Heart right ventricle (tissue), 16 donors: ENCODE measurements at regions of chr17 and their contacts with region 1.

Region 1: DNA sequence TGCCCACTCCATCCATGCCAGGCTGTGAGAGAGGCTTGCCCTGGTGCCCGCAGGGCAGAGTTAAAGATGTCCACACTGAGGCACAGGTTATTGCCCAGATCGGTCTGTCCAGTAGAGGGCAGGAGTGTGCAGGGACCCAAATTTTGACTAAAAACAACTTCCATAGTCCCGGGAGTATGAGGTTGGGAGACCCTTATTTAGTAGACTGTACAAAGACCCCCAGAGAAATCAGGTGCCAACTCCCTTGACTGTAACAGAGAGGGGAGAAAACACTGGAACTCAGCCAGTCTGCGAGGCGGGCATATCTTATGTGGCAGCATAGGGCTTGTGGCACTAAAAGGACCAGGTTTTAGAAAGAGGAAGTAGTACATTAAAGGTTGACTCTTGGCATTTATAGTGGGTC is 43.4 kb downstream of the HNF1B start:
- DNase-seq: peak in 1 of 2 donors; percentile 16
- ATAC-seq: peak in 6 of 8 donors; percentile 20 to 70 (median 51)
- H3K4me3 ChIP-seq: no peak overlapping the region
- H3K27ac ChIP-seq: no peak overlapping the region
- H3K4me1 ChIP-seq: no peaks in the 10 kb centered on the region
- H3K27me3 ChIP-seq: peaks cover 0 to 29% (median 13%) of the 10 kb centered on the region in 7 donors
- CTCF ChIP-seq: peak; percentile 31 to 67 (median 56)

Region 2: DNA sequence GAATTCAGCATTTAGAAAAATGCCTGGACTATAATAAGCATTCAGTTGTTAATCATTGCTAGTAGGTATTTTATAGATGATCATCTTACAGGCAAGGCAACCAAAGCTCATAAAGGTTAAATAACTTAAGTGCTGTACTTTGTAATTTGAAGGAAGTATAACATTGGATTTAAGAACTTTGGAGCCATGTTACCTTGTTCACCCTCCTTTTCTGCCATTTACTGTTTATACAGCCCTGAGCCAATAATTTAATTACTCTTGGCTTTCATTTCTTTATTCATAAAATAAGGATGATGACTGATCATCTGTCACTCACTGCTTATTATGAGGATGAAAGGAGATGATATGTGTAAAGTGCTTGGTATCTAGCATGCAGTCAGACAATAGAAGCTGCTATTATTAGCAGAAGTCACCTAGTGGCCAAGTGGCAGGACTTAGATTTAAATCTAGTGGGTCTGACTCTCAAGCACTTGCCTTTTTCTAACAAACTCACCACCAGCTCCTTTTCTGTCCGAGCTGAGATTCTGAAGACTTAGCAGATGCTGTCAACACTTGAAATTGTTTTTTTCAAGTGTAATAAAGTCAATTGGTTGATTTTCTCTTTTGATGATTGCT is 40.0 kb before region 1 on chr17:
- intact Hi-C with region 1: no loop called
- DNase-seq: no peak
- ATAC-seq: no peak
- H3K4me3 ChIP-seq: no peak overlapping the region
- H3K27ac ChIP-seq: no peak overlapping the region
- H3K4me1 ChIP-seq: no peaks in the 10 kb centered on the region
- H3K27me3 ChIP-seq: no peaks in the 10 kb centered on the region
- CTCF ChIP-seq: no peak

Region 3: DNA sequence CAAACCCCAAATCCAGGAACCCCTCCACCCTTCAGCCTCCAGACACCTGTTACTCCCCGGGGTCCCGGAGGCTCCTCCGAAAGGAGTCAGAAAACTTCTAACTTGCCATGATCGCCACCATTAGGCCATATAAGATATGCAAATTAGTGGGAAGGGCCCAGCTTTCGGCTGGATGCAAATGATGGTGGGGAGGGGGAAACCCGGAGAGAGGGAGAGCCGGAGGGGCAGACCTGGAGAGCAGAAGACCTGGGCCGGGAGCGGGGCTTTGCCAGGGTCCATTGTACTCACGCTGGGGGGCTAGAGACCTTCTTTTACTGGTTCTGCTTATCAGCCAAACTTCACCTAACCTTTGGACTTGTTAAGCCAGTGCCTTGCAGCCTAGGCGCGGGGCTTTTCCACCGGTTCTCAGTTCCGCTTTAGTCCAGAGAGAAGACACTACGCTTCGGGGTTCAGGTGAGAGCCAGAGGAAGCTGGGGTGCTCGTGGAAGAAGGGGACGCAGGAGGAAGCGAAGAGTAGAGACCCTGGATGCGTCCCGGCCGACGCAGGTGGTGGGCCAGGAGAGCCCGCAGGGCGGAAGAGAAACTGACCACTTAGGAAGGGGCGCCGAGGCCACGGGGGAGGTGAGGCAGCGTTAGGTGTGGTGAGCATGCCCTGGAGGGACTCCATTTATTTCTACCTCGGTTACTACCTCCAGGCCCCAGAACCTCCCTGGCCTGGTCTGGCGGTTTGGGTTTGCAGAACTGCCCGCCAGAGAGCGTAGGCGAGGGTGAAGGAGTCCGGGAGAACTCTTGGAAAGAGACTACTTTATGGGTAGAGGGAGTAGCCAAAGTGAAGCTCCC is 43.7 kb after region 1 on chr17 and contains the start of gene HNF1B:
- intact Hi-C with region 1: loop called in 2 of 10 experiments (anchors 2 to 10 kb)
- DNase-seq: no peak
- ATAC-seq: no peak
- H3K4me3 ChIP-seq: peak within 1 kb of the TSS in 8 of 10 donors; percentile 19 to 52 (median 35)
- H3K27ac ChIP-seq: no peak within 1 kb of the TSS
- H3K4me1 ChIP-seq: peaks cover 8 to 42% (median 32%) of the 10 kb centered on the region in 9 donors
- H3K27me3 ChIP-seq: peaks cover 32 to 99% (median 92%) of the 10 kb centered on the region in 7 donors
- CTCF ChIP-seq: no peak
- total RNA-seq, gene HNF1B: not detected

Region 4: DNA sequence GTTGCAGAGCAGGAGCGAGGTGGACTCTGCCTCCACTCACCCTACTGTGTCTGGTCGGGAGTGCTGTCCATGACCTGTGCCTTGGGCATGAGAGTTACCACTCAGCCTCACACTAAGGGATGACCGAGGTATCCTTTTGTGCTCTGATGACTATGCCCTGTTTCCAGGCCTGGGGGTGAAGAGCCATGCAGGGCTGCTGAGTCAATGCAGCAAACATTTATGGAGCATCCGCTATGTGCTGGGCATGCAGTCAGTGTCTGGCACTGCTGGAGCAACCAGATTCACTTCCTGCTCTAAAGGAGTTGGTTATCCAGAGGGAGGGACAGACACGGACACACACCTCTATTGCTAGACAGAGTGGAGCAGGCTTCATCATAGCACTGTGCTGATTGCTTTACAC is 51.0 kb after region 1 on chr17:
- intact Hi-C with region 1: loop called in 1 of 10 experiments (anchors 10 kb)
- DNase-seq: no peak
- ATAC-seq: no peak
- H3K4me3 ChIP-seq: no peak overlapping the region
- H3K27ac ChIP-seq: no peak overlapping the region
- H3K4me1 ChIP-seq: no peaks in the 10 kb centered on the region
- H3K27me3 ChIP-seq: peaks cover 0 to 62% (median 43%) of the 10 kb centered on the region in 7 donors
- CTCF ChIP-seq: no peak

Region 5: DNA sequence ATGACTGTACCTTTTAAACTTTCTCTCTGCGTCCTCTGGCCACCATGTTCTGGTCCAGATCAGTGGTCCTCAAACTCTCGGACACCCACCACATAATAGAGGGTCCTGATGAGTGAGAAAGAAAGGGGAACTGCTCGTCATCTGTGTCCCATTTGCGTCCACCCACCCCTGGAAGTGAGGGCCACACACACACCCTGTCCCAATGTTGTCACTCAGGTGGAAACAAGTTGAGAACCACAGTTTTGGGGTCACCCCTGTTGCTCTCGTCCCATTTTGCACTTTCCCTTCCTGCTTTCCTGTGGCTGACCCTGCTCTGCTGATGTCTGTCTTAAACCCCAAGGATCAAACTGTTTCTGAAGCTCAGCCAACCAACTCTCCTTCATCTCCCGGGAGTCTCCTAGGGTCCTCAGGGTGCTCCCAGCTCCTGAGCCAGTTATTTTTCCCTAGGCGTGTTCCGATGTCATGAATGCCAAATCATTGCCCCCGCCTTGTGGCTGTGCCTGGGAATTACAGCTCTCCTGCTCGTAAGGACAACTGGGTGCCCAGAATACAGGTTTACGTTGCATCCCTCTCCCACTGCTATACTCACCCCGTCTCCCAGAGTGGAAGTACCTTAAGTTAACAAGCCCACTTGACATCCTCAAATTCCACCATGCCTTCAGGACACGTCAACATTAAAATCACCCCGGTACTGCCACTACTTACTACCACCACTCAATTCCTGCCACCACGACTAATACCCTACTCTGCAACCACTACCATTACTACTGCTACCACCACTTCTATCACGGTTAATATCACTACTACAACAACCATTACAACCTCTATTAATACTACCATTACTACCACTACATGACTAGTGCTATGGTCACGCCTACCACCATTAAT is 69.4 kb after region 1 on chr17:
- intact Hi-C with region 1: loop called in 3 of 10 experiments (anchors 2 to 10 kb)
- DNase-seq: peak; percentile 10 to 41
- ATAC-seq: peak in 1 of 8 donors; percentile 51
- H3K4me3 ChIP-seq: no peak overlapping the region
- H3K27ac ChIP-seq: no peak overlapping the region
- H3K4me1 ChIP-seq: no peaks in the 10 kb centered on the region
- H3K27me3 ChIP-seq: peaks cover 0 to 39% (median 14%) of the 10 kb centered on the region in 7 donors
- CTCF ChIP-seq: peak; percentile 28 to 65 (median 58)

Region 6: GRCh38 chr17:37844158-37844976 is 142.9 kb after region 1 on chr17:
- intact Hi-C with region 1: loop called in 1 of 10 experiments (anchors 10 kb)
- DNase-seq: peak; percentile 34 to 57
- ATAC-seq: peak; percentile 73 to 92 (median 88)
- H3K4me3 ChIP-seq: peak overlapping the region in 5 of 10 donors; percentile 16 to 41 (median 25)
- H3K27ac ChIP-seq: peak overlapping the region in 1 of 10 donors; percentile 66
- H3K4me1 ChIP-seq: peaks cover 0 to 19% (median 5%) of the 10 kb centered on the region in 9 donors
- H3K27me3 ChIP-seq: peaks cover 0 to 57% (median 27%) of the 10 kb centered on the region in 7 donors
- CTCF ChIP-seq: peak; percentile 40 to 90 (median 67)